ENCODE measurements at regions of chr1 and their contacts with region 1.

Region 1: GRCh38 chr1:87292684-87293493 is 35.8 kb upstream of the LMO4 start:
- DNase-seq: peak in 1 of 2 donors; percentile 73
- H3K4me3 ChIP-seq: no peak overlapping the region
- H3K27ac ChIP-seq: no peak overlapping the region
- H3K4me1 ChIP-seq: no peaks in the 10 kb centered on the region
- H3K27me3 ChIP-seq: no peaks in the 10 kb centered on the region
- CTCF ChIP-seq: peak; percentile 36 to 80 (median 66)

Region 2: DNA sequence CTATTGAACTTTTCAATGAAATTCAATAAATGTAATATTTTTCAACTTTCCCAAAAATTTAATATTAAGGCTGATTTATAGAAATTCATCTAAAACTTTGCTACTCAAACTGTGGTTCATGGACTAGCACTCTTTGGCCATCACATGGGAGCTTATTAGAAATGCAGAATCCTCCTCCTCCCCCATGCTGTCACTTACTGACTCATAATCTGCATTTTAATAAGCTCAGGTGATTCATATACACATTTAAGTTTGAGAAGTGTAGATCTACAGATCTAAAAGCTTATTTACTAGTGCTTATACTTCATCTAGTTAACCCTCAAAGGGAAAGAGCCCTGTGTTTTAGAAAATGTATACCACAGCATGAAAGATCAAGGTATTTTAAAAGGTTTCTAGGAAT is 294.2 kb before region 1 on chr1:
- intact Hi-C with region 1: no loop called
- DNase-seq: no peak
- H3K4me3 ChIP-seq: no peak overlapping the region
- H3K27ac ChIP-seq: no peak overlapping the region
- H3K4me1 ChIP-seq: no peaks in the 10 kb centered on the region
- H3K27me3 ChIP-seq: no peaks in the 10 kb centered on the region
- CTCF ChIP-seq: no peak

Region 3: DNA sequence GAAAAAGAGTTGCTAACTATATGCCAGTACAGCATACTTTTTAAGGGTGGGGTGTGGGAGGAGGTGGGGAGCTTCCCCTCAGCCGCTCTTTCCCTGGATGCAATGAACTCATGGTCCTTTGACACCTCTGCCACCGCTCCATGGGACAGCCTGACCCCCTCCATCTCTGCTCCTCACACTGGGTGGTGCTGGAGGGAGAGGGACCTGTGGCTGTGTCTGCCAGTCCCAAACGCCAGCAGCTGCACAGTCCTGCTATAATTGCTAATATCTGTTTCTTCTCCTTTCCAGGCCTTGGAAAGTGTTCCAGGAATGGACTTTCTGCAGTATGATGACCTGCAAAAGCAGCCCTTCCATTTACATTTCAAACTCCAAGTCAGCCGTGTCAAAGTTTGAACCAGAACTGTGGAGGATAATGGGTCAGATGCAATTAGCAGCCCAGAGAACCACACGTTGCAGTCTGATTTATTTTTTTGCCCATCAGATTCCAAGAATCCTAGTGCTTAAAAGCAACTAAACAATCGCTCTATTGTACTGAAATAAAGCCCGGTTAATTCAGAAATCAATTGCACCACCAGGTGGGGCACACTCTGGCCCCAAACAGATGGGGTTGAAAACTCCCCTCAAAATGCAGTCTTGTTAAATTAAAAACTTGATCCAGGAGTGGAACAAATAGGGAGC is 124.9 kb before region 1 on chr1:
- intact Hi-C with region 1: no loop called
- DNase-seq: no peak
- H3K4me3 ChIP-seq: no peak overlapping the region
- H3K27ac ChIP-seq: no peak overlapping the region
- H3K4me1 ChIP-seq: no peaks in the 10 kb centered on the region
- H3K27me3 ChIP-seq: no peaks in the 10 kb centered on the region
- CTCF ChIP-seq: no peak

Region 4: DNA sequence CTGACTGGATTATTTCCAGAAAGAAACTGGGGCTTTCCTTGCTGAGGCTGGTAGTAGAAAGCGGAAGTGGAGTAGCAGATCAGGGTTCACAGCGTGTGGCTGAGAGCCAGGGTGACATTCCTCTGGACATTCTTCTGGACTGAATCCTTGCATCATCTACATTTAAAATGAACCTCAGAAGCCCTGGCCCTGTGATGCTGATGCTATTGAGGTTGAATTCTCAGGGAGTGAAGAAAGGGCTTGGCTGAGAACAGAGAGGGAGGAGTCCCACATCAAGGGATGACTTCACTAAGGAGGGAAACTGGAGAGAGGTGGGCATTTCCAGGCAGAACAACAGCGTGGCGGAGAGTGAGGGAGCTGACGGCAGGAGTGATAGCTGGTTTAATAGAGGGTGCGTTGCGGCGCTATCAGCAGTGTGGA is 66.5 kb before region 1 on chr1:
- intact Hi-C with region 1: no loop called
- DNase-seq: peak; percentile 11 to 85
- H3K4me3 ChIP-seq: no peak overlapping the region
- H3K27ac ChIP-seq: peak overlapping the region; percentile 10 to 49
- H3K4me1 ChIP-seq: no peaks in the 10 kb centered on the region
- H3K27me3 ChIP-seq: no peaks in the 10 kb centered on the region
- CTCF ChIP-seq: no peak

Region 5: DNA sequence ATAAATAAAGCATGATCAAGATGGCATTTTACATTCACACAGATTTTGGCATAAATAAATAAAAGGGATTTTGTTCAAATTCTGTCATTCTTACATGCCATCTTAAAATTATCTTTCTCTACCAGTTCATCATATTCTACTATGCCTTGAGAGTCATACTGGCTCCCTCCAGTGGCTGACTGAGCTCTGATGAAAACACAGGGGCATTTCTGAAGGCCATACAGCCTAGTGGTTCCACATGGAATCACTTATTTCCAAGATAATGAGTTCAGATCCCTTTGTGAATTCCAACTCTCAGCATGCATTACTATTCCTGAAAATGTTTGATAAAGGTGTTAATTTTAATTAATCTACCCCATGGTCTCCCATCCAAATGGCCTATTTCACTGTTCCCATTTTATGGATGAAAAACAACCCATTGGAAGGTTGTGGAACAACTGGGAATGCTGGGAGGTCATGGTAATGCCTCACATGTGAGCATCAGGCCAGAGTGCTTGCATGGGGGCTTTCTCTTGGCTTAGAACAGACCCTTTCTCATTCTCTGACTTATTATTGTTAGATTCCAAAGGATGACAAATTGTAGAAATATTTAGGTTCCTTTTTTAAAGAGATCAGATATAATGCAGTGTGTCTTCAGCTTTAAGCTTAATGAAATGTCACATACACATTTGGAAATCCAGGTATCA is 768.7 kb after region 1 on chr1:
- intact Hi-C with region 1: loop called (anchors 10 kb)
- DNase-seq: no peak
- H3K4me3 ChIP-seq: no peak overlapping the region
- H3K27ac ChIP-seq: no peak overlapping the region
- H3K4me1 ChIP-seq: no peaks in the 10 kb centered on the region
- H3K27me3 ChIP-seq: no peaks in the 10 kb centered on the region
- CTCF ChIP-seq: peak; percentile 44 to 73 (median 67)

Region 6: DNA sequence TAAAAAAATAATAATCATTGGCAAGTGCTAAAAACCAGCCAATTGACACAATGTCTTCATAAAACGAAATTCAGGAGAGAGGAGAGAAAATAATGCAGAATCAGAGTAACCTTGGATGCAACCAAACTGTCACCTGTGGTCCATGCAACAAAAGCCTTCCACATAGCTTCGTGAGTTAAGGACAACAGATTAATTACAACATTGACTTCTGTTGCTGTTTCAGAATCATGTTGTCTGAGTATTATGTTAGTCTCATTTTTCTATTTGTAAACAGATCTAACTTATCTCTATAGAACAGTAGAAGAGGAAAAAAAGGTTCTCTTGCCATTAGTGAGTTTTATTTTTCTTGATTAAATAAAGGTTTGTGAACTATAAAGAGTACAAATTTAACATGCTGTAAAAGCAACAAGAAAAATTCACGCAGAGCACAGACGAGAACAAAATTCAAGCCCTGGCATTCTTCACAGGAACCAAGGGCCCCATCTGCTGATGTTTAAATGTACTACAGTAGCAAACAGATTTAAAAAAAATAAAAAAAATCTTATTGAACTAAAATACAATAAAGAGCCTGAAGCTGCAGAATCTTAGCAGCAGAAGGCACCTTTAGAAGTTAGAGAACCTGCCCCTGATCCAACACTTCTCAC is 1010.1 kb after region 1 on chr1:
- intact Hi-C with region 1: loop called (anchors 5 kb)
- DNase-seq: no peak
- H3K4me3 ChIP-seq: no peak overlapping the region
- H3K27ac ChIP-seq: no peak overlapping the region
- H3K4me1 ChIP-seq: no peaks in the 10 kb centered on the region
- H3K27me3 ChIP-seq: no peaks in the 10 kb centered on the region
- CTCF ChIP-seq: peak in 2 of 3 experiments; percentile 26 to 55